H1 (cell line): ENCODE measurements at regions of chr2 and their contacts with region 1.

Region 1: DNA sequence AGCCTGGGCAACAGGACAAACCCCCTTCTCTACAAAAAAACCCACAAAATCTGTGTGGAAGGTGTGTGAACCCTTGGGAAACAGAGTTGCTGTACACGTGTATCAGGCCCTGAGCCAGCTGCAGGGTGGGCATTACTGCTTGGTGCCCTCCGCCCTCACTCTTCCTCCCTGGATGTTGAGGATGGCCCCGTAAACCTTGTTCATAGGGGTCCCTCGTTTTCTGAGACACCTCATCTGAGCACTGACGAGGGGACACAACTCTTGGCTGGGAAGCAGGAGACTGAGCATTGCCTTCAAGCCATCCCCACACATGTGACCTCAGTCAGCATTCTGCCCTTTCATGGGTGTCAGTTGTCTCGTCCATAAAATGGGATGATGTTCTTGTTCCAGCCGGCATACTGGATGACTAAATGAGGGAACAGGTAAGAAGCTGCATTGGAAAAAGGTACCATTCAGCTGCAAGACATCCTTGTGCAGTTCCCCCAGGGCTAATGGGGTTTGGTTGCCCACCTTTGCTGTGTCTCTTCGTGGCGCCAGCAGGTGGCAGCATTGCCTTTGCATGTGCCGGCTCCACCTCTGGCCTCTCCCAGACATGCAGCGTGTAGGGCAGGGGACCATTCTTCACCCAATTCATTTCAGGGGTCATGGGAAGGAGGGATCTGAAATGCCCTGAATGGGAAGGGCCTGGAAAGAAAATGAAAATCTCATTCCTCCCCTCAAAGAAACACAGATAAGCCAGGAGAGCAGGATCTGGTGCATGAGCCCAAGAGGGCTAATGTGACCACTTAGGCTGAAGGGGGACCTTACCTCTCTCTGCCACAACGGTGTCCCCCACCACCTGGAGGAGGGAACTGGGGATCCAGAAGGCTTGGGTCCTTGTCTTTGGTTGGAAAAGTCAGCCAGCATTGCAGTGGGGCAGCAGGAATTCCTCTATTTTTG is 36.4 kb upstream of the HAAO start:
- DNase-seq: peak; percentile 49 to 88
- H3K4me3 ChIP-seq: no peak overlapping the region
- H3K27ac ChIP-seq: no peak overlapping the region
- H3K4me1 ChIP-seq: no peaks in the 10 kb centered on the region; a peak in 2 of 7 replicates
- H3K27me3 ChIP-seq: peaks cover 0 to 9% (median 5%) of the 10 kb centered on the region in 4 experiments; a peak in 5 of 7 replicates
- CTCF ChIP-seq: peak; percentile 97 to 99 (median 98)
- EP300 ChIP-seq: no peak
- POLR2A ChIP-seq: no peak
- RAD21 ChIP-seq: peak; percentile 94 to 96

Region 2: DNA sequence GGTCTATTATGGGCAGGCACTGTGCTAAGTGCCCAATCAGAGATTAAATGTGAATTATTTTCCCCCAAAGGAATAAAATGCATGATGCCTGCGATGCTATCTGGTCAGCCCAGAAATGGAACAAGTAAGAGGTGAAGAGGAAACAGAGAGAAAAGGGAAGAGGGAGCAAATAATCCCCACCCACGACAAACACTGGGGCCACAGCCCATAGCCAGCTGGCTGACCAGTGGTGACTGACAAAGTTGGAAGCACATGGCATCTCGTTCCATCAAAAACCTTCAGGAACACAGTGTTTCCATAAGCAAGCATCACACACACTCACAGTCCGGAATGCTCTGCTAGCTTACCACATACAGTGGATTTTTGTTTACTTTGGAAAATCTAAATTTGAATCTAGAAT is 446.6 kb before region 1 on chr2:
- CTCF ChIA-PET with region 1: no interaction called
- POLR2A ChIA-PET with region 1: no interaction called
- DNase-seq: no peak
- H3K4me3 ChIP-seq: no peak overlapping the region
- H3K27ac ChIP-seq: no peak overlapping the region
- H3K4me1 ChIP-seq: no peaks in the 10 kb centered on the region
- H3K27me3 ChIP-seq: no peaks in the 10 kb centered on the region
- CTCF ChIP-seq: no peak
- EP300 ChIP-seq: no peak
- POLR2A ChIP-seq: no peak
- RAD21 ChIP-seq: no peak

Region 3: GRCh38 chr2:42844901-42845821 is 16.4 kb after region 1 on chr2:
- CTCF ChIA-PET with region 1: interaction called, 137 read pairs
- POLR2A ChIA-PET with region 1: no interaction called
- DNase-seq: no peak
- H3K4me3 ChIP-seq: no peak overlapping the region
- H3K27ac ChIP-seq: no peak overlapping the region
- H3K4me1 ChIP-seq: no peaks in the 10 kb centered on the region
- H3K27me3 ChIP-seq: no peaks in the 10 kb centered on the region
- CTCF ChIP-seq: no peak
- EP300 ChIP-seq: no peak
- POLR2A ChIP-seq: no peak
- RAD21 ChIP-seq: no peak

Region 4: DNA sequence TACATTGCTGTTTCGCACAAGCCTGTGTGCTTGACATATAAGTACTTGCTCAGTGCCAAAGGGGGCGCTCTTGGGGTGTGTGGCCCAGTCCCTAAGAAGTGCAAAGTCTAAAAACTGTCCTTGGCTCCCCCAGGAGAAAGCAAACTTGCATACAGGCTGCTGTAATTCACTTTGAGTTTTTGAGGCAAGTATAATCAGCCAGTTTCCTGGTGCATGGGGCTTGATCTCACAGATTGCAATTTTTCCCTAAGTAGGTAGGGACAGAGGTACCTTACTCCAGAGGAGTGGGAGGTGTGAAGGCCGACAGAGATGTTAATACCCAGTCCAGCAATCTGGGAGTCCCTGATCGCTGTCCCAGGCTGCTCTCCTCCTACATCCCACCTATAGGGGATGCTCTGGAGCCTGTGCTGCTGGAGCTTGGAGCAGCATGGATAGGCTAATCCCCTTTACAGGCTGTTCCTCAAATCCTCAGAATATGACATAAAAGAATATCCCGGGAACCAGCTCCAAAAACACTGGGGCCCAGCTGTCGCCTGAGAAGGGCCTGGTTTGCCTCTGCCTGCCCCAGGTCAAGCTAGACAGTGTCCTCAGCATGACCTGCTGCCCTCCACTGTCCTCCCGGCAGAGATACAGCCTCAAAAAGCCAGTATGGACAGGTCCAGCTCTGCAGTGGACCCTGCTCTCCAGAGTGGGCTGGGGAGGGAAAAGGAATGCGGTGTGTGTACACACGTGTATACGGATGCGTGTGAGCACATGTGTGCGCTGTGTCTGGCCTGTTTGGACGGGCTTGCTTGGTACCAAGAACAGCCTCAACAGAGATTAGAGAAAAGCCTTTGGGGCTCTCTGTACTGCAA is 100.2 kb after region 1 on chr2:
- CTCF ChIA-PET with region 1: interaction called, 74 read pairs
- POLR2A ChIA-PET with region 1: no interaction called
- DNase-seq: peak in 1 of 2 experiments; percentile 70
- H3K4me3 ChIP-seq: no peak overlapping the region; a peak in 1 of 8 replicates
- H3K27ac ChIP-seq: peak overlapping the region; percentile 56
- H3K4me1 ChIP-seq: peaks cover 29 to 49% (median 41%) of the 10 kb centered on the region in 4 experiments
- H3K27me3 ChIP-seq: no peaks in the 10 kb centered on the region
- CTCF ChIP-seq: peak in 2 of 3 experiments; percentile 69 to 77; a peak in 3 of 4 replicates
- EP300 ChIP-seq: no peak
- POLR2A ChIP-seq: no peak
- RAD21 ChIP-seq: peak; percentile 33 to 48; a peak in 3 of 4 replicates

Region 5: DNA sequence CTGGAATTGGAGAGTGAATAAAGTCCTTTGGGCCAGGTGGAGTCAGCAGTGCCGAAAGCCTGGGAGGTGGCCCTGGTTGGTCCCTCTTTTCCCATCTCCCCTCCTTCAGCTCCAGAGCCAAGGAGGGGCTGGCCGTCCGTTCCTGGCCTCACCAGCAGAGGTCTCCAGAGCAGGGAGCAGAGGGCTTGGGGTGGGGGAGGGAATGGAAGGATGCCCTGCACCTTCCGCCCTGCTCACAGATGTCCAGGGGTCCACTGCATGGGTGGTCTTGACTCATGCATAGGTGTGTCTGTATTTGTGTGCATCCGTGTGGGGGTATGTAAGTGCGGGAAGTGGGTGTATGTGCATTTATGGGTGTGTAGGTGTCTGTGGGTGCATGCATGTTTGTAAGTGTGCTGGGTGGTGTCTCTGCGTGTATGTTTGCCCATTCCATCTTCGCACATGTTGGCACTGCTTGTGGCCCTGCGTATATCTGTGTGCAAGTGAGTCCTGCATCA is 195.8 kb after region 1 on chr2:
- CTCF ChIA-PET with region 1: interaction called, 44 read pairs
- POLR2A ChIA-PET with region 1: no interaction called
- DNase-seq: peak; percentile 38 to 89
- H3K4me3 ChIP-seq: no peak overlapping the region
- H3K27ac ChIP-seq: no peak overlapping the region
- H3K4me1 ChIP-seq: peaks cover 2 to 10% (median 3%) of the 10 kb centered on the region in 4 experiments; a peak in 4 of 7 replicates
- H3K27me3 ChIP-seq: no peaks in the 10 kb centered on the region
- CTCF ChIP-seq: peak; percentile 87 to 93 (median 90)
- EP300 ChIP-seq: no peak
- POLR2A ChIP-seq: no peak
- RAD21 ChIP-seq: peak; percentile 88 to 93

Region 6: DNA sequence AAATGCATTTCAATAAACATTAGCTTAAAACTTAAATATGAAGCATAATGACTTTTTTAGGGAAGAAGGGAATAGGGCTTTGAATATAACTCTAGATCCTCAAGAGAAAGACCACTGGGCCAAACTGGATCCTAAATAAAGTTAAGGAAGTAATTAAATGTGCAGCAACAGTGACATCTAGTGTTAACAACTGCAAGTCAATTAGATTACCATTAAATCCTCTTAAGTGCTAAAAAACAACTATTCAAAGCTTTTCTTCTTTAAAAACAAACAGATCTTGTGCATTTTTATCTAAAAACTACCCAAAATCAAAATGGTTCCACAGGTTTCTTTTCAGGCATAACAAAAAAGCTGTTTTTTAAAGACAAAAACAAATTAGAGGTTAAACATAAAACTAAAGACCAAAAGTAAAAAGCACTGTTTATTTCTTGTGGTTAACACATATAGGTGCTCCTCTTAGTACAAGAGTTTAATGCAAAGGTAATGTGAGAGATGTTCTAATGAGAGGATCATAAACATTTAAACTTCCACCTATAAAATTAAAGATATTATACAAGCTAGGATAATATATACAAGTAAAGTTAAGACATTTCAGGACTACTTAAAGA is 655.7 kb after region 1 on chr2:
- CTCF ChIA-PET with region 1: interaction called, 13 read pairs
- POLR2A ChIA-PET with region 1: no interaction called
- DNase-seq: peak in 1 of 2 experiments; percentile 21
- H3K4me3 ChIP-seq: no peak overlapping the region
- H3K27ac ChIP-seq: no peak overlapping the region
- H3K4me1 ChIP-seq: no peaks in the 10 kb centered on the region
- H3K27me3 ChIP-seq: no peaks in the 10 kb centered on the region
- CTCF ChIP-seq: peak in 2 of 3 experiments; percentile 38 to 51; a peak in 2 of 4 replicates
- EP300 ChIP-seq: no peak
- POLR2A ChIP-seq: no peak
- RAD21 ChIP-seq: peak; percentile 75 to 81